Posterior vena cava (tissue), 2 donors: ENCODE measurements at regions of chr3 and their contacts with region 1.

Region 1: DNA sequence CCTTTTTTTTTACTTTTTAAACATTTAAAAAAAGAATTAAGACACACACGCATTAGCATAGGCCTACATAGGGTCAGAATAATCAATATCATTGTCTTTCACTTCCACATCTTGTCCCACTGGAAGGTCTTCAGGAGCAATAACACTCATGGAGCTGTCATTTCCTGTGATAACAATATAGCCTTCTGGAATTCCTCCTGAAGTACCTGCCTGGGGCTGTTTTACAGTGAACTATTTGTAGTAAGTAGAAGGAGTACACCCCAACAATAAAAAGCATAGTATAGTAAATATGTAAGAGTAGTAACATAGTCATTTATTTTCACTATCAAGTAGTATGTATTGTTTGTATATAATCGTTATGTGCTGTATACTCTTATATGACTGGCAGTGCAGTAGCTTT is 19.5 kb upstream of the CLDN18 start:
- DNase-seq: no peak

Region 2: GRCh38 chr3:138060792-138061191 is 70.4 kb after region 1 on chr3:
- intact Hi-C with region 1: loop called in 1 of 2 experiments (anchors 2 kb)
- DNase-seq: no peak